Activated CD4-positive, alpha-beta T cell treated with anti-CD3 and anti-CD28 coated beads, Interleukin-2, amount 10 ng/mL, durations not matched to agents 24 days and 14 days (primary cell): ENCODE measurements at regions of chr13 and their contacts with region 1.

Region 1: DNA sequence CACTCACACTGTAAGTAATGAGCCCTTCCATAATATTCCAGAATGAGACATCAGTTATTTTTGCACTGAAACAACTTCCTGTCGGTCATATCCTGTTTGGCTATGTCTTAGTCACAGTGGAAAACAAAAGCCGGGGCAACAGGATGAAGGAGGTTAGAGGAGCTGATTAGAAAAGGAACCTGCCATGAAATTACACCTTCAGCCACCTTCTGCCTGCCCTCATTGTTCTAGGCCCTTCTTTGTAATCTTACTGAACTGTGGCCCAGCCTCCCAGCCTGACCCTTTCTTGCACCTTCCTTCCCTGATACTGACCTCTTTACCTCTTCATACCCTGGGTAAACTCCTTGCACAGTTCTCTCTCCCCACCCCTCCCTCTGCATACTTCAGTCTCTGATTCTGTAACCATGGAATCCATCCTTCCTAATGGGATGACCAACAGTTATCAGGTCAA is 67.3 kb downstream of the DOCK9 start:
- DNase-seq: peak; percentile 86
- H3K4me3 Mint-ChIP-seq: peak overlapping the region; percentile 56
- H3K27ac Mint-ChIP-seq: peak overlapping the region; percentile 94
- H3K4me1 Mint-ChIP-seq: peaks cover 36% of the 10 kb centered on the region
- H3K27me3 Mint-ChIP-seq: no peaks in the 10 kb centered on the region

Region 2: DNA sequence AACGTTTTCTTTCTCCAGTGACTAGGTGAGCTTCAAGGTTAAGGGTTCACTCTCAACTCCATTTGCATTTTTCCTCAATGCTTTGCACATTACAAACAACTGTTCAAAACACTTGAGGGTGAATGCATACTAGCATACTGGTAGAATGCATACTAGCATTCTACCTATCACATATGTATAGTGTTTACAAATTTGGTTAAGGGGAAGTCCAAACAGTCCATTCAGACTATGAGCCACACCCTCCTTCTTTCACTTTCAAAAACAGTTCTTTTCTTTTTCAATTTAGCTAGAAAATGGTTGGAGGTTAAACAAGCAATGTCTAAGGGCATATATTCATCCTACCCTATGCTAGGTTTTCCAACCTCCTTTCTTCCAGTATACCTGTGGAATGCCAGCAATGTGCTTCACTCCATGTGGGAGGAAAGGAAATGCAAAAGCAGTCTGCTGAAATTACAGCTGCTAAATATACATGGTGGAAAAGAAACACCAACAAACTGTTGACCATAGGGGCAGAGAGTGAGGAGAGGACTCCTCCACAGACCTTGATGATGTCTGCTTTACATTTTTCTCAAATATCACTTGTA is 35.3 kb before region 1 on chr13:
- intact Hi-C with region 1: loop called (anchors 1 kb)
- DNase-seq: no peak
- H3K4me3 Mint-ChIP-seq: peak overlapping the region; percentile 70
- H3K27ac Mint-ChIP-seq: peak overlapping the region; percentile 93
- H3K4me1 Mint-ChIP-seq: peaks cover 31% of the 10 kb centered on the region
- H3K27me3 Mint-ChIP-seq: no peaks in the 10 kb centered on the region

Region 3: DNA sequence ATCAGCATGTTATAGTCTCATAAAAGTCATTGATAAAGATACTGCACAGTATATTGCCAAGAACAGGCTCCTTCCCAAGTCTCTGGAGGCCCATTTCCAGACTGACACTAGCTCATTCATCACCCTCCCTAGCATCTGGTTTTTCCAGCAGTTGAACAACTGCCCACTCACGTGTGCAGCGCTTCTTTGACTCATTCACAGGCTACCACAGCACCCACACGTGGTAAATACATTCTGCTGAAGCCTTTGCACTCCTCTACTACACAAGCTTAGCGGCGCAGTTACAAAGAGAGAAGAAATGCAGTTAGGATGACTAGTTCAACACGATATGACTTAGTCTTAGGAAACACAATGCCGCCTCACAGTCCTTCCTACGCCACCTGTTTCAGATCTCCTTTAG is 20.3 kb before region 1 on chr13:
- intact Hi-C with region 1: loop called (anchors 1 kb)
- DNase-seq: no peak
- H3K4me3 Mint-ChIP-seq: peak overlapping the region; percentile 18
- H3K27ac Mint-ChIP-seq: peak overlapping the region; percentile 17
- H3K4me1 Mint-ChIP-seq: peaks cover 20% of the 10 kb centered on the region
- H3K27me3 Mint-ChIP-seq: no peaks in the 10 kb centered on the region

Region 4: DNA sequence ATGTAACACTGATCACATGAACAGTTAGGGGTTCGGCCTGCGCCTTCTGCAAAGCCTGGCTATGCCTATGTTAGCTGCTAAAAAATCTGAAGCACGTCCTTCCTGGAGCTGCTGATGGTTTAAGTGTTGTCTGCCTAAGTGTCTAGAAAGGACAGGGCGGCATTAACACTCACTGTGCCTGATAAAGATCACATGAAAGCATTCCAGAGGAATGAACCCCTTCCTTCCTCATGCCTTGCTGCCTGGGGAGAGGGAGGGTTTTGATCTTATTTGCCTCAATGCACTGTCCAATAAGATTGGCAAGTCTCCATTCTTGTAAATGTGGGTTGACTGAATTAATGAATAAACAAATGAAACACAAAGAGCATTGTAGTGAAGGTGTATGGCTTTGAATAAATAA is 62.1 kb after region 1 on chr13:
- intact Hi-C with region 1: no loop called
- DNase-seq: no peak
- H3K4me3 Mint-ChIP-seq: no peak overlapping the region
- H3K27ac Mint-ChIP-seq: no peak overlapping the region
- H3K4me1 Mint-ChIP-seq: peaks cover 35% of the 10 kb centered on the region
- H3K27me3 Mint-ChIP-seq: no peaks in the 10 kb centered on the region

Region 5: GRCh38 chr13:98998831-98999638 is 88.5 kb after region 1 on chr13:
- intact Hi-C with region 1: loop called (anchors 5 kb)
- DNase-seq: peak; percentile 75
- H3K4me3 Mint-ChIP-seq: peak overlapping the region; percentile 44
- H3K27ac Mint-ChIP-seq: peak overlapping the region; percentile 56
- H3K4me1 Mint-ChIP-seq: peaks cover 81% of the 10 kb centered on the region
- H3K27me3 Mint-ChIP-seq: no peaks in the 10 kb centered on the region

Region 6: DNA sequence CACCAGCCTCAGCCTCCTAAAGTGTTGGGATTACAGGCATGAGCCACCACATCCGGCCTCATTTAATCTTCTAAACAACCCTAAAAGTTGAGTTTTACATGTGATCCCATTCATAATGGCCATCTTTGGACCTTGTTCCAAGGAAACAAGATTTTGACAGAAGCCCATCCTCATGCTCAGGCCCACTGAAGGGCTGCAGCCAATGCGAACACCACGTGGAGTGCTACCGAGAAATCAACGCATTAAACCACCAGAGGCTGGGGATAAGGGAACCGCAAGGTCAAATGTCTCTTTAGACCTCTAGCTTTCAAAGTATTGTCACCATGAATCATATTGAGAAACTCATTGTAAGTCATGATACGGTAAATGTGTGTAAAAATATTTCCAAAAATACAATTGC is 116.7 kb after region 1 on chr13:
- intact Hi-C with region 1: loop called (anchors 2 kb)
- DNase-seq: peak; percentile 70
- H3K4me3 Mint-ChIP-seq: peak overlapping the region; percentile 65
- H3K27ac Mint-ChIP-seq: peak overlapping the region; percentile 95
- H3K4me1 Mint-ChIP-seq: peaks cover 63% of the 10 kb centered on the region
- H3K27me3 Mint-ChIP-seq: no peaks in the 10 kb centered on the region